ENCODE measurements at regions of chr15 and their contacts with region 1.

Region 1: GRCh38 chr15:53384417-53384816 is 375.0 kb downstream of the WDR72 start:
- DNase-seq: peak in 4 of 7 donors; percentile 21 to 38 (median 28)
- H3K4me3 ChIP-seq: no peak overlapping the region
- H3K27ac ChIP-seq: no peak overlapping the region
- H3K4me1 ChIP-seq: no peaks in the 10 kb centered on the region
- H3K27me3 ChIP-seq: no peaks in the 10 kb centered on the region
- CTCF ChIP-seq: peak in 5 of 6 experiments; percentile 22 to 50 (median 49)
- POLR2A ChIP-seq: no peak

Region 2: GRCh38 chr15:53448232-53449001 is 64.0 kb after region 1 on chr15:
- intact Hi-C with region 1: loop called in 1 of 2 experiments (anchors 10 kb)
- DNase-seq: peak in 3 of 7 donors; percentile 8 to 21 (median 17)
- H3K4me3 ChIP-seq: peak overlapping the region in 1 of 4 donors; percentile 13
- H3K27ac ChIP-seq: peak overlapping the region in 1 of 5 donors; percentile 18
- H3K4me1 ChIP-seq: peaks cover 8 to 12% of the 10 kb centered on the region in 2 donors
- H3K27me3 ChIP-seq: no peaks in the 10 kb centered on the region
- CTCF ChIP-seq: no peak
- POLR2A ChIP-seq: no peak

Measured in adrenal gland (tissue), 19 donors.